ENCODE measurements at regions of chr18 and their contacts with region 1.

Region 1: GRCh38 chr18:47235096-47235495 is 16.4 kb downstream of the SKOR2 start:
- DNase-seq: no peak
- H3K4me3 ChIP-seq: no peak overlapping the region
- CTCF ChIP-seq: no peak
- POLR2A ChIP-seq: no peak

Region 2: DNA sequence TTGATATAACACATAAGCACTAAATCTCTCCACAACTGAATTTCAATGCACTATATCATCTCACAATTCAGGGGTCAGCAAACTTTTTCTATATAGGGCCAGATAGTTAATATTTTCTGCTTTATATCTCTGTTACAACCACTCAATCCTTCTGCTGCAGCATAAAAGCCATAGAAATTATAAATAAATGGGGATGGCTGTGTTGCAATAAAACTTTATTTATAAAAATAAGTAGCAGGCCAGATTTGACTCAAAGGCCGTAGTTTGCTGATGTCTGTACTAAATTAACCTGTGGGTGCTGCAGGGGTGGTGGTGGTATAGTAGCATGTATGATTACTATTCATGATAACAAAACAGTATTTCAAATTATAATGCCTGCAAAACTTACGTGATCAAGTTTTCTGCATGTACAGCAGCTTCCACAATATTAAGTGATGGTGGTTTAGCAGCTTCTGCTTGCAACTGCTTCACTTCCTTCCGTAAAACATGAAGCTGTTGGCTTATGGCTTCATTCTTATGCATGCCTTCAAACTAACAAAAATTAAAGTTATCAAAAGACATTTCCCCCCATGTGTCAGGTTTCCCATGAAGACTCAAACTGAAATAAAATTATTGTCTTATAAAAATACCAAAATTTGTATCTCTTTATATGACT is 1345.6 kb before region 1 on chr18:
- intact Hi-C with region 1: loop called (anchors 5 kb)
- DNase-seq: no peak
- H3K4me3 ChIP-seq: no peak overlapping the region
- CTCF ChIP-seq: no peak
- POLR2A ChIP-seq: no peak

Region 3: DNA sequence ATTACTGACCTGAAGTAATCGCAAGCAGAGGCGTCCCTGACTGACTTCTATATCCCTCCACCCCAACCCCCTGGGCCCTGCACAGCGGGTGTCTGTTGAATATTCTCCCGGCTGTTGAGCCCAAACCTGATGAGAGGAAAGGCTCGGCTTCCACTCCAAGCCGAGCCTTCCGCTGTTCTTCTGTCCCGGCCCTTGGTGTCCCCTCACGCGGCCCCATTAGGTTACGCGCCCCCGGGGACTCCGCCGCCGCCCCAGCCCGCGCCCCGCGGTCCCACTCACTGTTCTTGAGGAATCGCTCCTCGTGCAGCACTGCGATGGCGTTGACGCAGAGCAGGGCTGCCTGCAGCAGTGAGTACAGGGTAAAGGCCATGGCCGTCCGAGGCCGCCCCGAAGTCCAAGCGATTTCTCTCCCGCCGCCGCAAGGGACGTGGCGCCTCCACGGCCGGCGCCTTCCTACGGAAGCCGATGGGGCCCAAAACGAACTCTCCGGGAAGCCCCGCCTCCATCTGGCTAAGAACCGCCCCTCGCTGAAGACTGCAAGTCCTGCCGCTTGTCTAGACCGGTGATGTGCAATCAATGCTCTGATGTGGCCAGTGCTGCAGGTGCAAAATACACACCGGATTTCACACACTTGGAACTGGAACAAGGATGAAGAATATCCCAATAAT is 59.1 kb before region 1 on chr18 and contains the start of gene IER3IP1:
- intact Hi-C with region 1: no loop called
- DNase-seq: peak; percentile 86 to 97
- H3K4me3 ChIP-seq: peak within 1 kb of the TSS; percentile 83
- CTCF ChIP-seq: no peak
- POLR2A ChIP-seq: no peak
- total RNA-seq, gene IER3IP1: 7.1 to 14.5 (median 11.2) TPM

Region 4: GRCh38 chr18:47287911-47288585 is 53.0 kb after region 1 on chr18:
- intact Hi-C with region 1: no loop called
- DNase-seq: no peak
- H3K4me3 ChIP-seq: no peak overlapping the region
- CTCF ChIP-seq: no peak
- POLR2A ChIP-seq: no peak

Region 5: DNA sequence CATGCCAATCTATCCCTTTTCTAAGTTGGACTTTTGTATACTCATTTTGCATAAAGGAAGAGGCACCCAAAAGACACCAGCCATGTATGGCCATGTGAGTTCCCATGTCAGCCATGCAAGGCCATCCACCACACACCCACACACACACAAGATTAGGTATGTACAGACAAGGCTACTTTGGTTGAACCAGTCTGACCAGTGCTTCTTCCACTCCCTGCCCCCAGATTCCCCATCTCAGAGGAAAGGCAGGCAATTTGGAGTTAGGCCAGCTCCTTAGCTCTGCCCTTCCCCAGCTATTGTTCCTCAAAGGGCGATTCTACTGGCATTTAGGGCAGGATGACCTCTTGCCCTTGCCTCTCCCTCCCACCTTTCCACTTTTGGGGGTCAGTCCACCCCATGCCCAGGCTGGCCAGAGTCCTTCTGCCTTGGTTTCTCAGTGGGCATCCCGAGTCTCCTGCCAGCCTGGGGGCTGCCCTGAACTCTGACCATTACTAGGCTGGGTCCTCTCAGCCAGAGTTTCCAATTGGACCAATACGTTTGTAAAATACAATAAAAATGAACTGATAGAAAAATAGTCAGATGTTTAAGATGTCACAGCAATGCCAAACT is 1073.0 kb after region 1 on chr18:
- intact Hi-C with region 1: no loop called
- DNase-seq: no peak
- H3K4me3 ChIP-seq: no peak overlapping the region
- CTCF ChIP-seq: no peak
- POLR2A ChIP-seq: no peak